PC-3 (cell line): ENCODE measurements at regions of chr3 and their contacts with region 1.

Region 1: GRCh38 chr3:55128231-55128791 is 200.5 kb upstream of the LRTM1 start:
- DNase-seq: no peak
- ATAC-seq: no peak
- H3K4me3 ChIP-seq: no peak overlapping the region
- H3K27ac ChIP-seq: no peak overlapping the region
- H3K4me1 ChIP-seq: no peaks in the 10 kb centered on the region
- H3K27me3 ChIP-seq: peaks cover 59% of the 10 kb centered on the region
- CTCF ChIP-seq: no peak

Region 2: GRCh38 chr3:55017876-55018275 is 110.4 kb before region 1 on chr3:
- CTCF ChIA-PET with region 1: no interaction called
- POLR2A ChIA-PET with region 1: no interaction called
- intact Hi-C with region 1: no loop called
- DNase-seq: no peak
- ATAC-seq: no peak
- H3K4me3 ChIP-seq: no peak overlapping the region
- H3K27ac ChIP-seq: no peak overlapping the region
- H3K4me1 ChIP-seq: no peaks in the 10 kb centered on the region
- H3K27me3 ChIP-seq: peaks cover 11% of the 10 kb centered on the region; the same call in 1 of the 2 replicates
- CTCF ChIP-seq: no peak

Region 3: DNA sequence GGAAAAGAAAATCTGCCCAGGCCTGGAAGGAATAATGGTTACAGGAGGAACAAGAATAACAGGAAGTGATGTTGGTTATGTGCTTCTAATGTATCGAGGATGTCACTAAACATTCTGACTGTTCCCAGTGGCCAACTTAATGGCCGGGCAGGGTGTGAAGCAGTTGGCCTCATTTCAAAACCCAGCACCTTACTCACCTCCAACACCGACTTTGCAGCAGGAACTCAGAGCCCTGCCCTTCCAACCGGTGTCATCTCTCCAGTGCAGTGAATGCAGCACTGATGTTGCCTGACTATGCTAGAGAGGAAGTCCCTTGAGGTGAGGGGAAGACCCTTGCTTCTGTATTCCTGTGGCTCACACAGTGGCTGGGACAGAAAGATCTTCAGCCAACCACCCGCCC is 38.0 kb before region 1 on chr3:
- CTCF ChIA-PET with region 1: no interaction called
- POLR2A ChIA-PET with region 1: interaction called, 13 read pairs
- intact Hi-C with region 1: no loop called
- DNase-seq: no peak
- ATAC-seq: no peak
- H3K4me3 ChIP-seq: no peak overlapping the region
- H3K27ac ChIP-seq: no peak overlapping the region
- H3K4me1 ChIP-seq: no peaks in the 10 kb centered on the region
- H3K27me3 ChIP-seq: peaks cover 30% of the 10 kb centered on the region
- CTCF ChIP-seq: no peak

Region 4: DNA sequence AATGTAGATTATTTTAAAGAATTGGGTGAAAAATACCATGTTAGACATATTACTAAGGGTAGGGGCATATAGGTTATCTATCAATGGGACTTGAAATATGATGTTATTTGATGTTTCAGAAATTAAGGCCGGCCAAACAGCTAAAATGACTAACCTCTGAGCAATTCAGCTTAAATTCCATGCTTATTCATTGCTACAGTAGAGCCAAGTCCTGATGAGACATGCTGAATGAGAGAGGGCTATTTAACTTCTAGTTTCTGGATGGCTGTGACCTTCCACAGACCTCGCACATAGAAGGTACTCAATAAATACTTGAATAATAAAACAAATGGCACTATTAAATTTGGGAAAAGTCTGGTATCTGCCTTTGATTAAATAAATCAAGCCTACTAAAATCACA is 534.4 kb after region 1 on chr3:
- CTCF ChIA-PET with region 1: no interaction called
- POLR2A ChIA-PET with region 1: no interaction called
- intact Hi-C with region 1: no loop called
- DNase-seq: peak; percentile 75
- ATAC-seq: peak; percentile 90
- H3K4me3 ChIP-seq: no peak overlapping the region
- H3K27ac ChIP-seq: no peak overlapping the region
- H3K4me1 ChIP-seq: peaks cover 11% of the 10 kb centered on the region; the same call in 1 of the 2 replicates
- H3K27me3 ChIP-seq: no peaks in the 10 kb centered on the region
- CTCF ChIP-seq: no peak